Activated naive CD4-positive, alpha-beta T cell treated with anti-CD3 and anti-CD28 coated beads for 36 hours (primary cell): ENCODE measurements at regions of chr1 and their contacts with region 1.

Region 1: GRCh38 chr1:16921391-16922185 is at the start of gene CROCC:
- DNase-seq: peak; percentile 76
- H3K4me3 Mint-ChIP-seq: peak within 1 kb of the TSS; percentile 65
- H3K27ac Mint-ChIP-seq: no peak within 1 kb of the TSS
- H3K4me1 Mint-ChIP-seq: peaks cover 18% of the 10 kb centered on the region
- H3K27me3 Mint-ChIP-seq: no peaks in the 10 kb centered on the region
- total RNA-seq, gene CROCC: 15.5 to 15.7 TPM

Region 2: GRCh38 chr1:16904560-16905111 is 17.0 kb before region 1 on chr1:
- CTCF ChIA-PET with region 1: interaction called, 3 read pairs
- intact Hi-C with region 1: loop called (anchors 1 kb)
- DNase-seq: peak; percentile 100
- H3K4me3 Mint-ChIP-seq: no peak overlapping the region
- H3K27ac Mint-ChIP-seq: no peak overlapping the region
- H3K4me1 Mint-ChIP-seq: peaks cover 32% of the 10 kb centered on the region
- H3K27me3 Mint-ChIP-seq: no peaks in the 10 kb centered on the region

Region 3: GRCh38 chr1:17250601-17251000 is 329.0 kb after region 1 on chr1:
- CTCF ChIA-PET with region 1: no interaction called
- intact Hi-C with region 1: no loop called
- DNase-seq: no peak
- H3K4me3 Mint-ChIP-seq: no peak overlapping the region
- H3K27ac Mint-ChIP-seq: no peak overlapping the region
- H3K4me1 Mint-ChIP-seq: no peaks in the 10 kb centered on the region
- H3K27me3 Mint-ChIP-seq: peaks cover 3% of the 10 kb centered on the region